Activated CD8-positive, alpha-beta memory T cell treated with anti-CD3 and anti-CD28 coated beads, Interleukin-2, amount 10 ng/mL, durations not matched to agents 7 days and 5 days (primary cell): ENCODE measurements at regions of chr6 and their contacts with region 1.

Region 1: GRCh38 chr6:63352587-63353285 is 33.0 kb upstream of the LGSN start:
- DNase-seq: peak; percentile 69
- ATAC-seq: peak; percentile 72
- H3K4me3 Mint-ChIP-seq: peak overlapping the region; percentile 71
- H3K27ac Mint-ChIP-seq: peak overlapping the region; percentile 84
- H3K4me1 Mint-ChIP-seq: peaks cover 20% of the 10 kb centered on the region
- H3K27me3 Mint-ChIP-seq: peaks cover 30% of the 10 kb centered on the region

Region 2: GRCh38 chr6:63313111-63313510 is 39.6 kb before region 1 on chr6:
- CTCF ChIA-PET with region 1: no interaction called
- DNase-seq: no peak
- ATAC-seq: no peak
- H3K4me3 Mint-ChIP-seq: no peak overlapping the region
- H3K27ac Mint-ChIP-seq: no peak overlapping the region
- H3K4me1 Mint-ChIP-seq: no peaks in the 10 kb centered on the region
- H3K27me3 Mint-ChIP-seq: peaks cover under 1% of the 10 kb centered on the region

Region 3: DNA sequence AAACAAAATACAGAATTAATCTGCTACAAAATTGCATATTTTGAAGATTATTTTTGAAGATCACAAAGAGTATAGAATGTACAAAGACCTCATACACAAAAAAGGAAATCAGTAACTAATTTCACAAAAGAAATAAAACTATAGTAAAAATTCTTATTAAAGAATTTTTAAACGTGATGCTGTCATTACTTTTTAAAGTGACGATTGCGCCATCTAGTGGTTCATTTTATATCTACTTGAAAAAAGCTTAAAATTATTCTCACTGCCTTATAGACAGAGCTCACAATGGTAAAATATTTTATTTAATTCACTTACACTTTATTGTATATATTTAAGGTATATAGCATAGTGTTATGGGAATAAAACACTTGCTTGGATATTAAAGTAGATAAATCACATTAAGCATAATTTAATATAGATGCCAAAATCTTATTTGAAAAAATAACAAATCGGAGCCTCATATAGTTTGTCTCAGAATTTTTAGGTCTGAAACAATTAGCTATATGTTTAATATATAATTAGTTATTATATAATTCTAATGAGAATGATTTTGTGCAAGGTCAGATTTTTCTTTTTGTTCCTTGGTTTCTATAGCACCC is 411.7 kb after region 1 on chr6:
- CTCF ChIA-PET with region 1: interaction called, 32 read pairs
- DNase-seq: no peak
- ATAC-seq: no peak
- H3K4me3 Mint-ChIP-seq: no peak overlapping the region
- H3K27ac Mint-ChIP-seq: no peak overlapping the region
- H3K4me1 Mint-ChIP-seq: no peaks in the 10 kb centered on the region
- H3K27me3 Mint-ChIP-seq: peaks cover 25% of the 10 kb centered on the region

Region 4: DNA sequence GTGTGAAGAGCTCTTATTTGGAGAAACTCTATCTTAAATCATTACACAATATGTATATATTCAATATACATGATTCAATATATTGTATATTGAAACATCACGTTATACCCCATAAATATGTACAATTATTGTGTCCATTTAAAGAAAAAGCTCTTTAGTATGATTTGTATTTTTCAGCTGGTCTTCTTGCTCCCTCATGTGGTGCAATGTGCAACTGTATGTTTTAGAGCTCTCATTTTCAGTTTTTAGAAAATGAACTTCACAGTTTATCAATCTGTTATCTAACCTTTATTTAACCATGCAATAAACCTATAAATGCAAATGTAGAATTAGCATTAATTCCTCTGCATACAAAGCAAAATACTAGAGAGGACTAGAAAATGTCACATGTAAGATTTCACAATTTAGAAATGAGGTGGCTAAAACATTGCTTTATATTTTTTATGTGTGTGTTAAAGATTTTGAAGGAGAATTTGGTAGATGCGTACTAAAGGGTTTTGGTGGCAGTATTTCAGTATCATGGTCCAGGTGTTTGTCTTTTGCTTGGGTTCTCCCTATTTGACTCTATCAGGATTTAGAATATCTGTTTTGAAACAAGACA is 450.0 kb after region 1 on chr6:
- CTCF ChIA-PET with region 1: interaction called, 14 read pairs
- DNase-seq: no peak
- ATAC-seq: no peak
- H3K4me3 Mint-ChIP-seq: no peak overlapping the region
- H3K27ac Mint-ChIP-seq: no peak overlapping the region
- H3K4me1 Mint-ChIP-seq: peaks cover 7% of the 10 kb centered on the region
- H3K27me3 Mint-ChIP-seq: peaks cover 5% of the 10 kb centered on the region